ENCODE measurements at regions of chr17 and their contacts with region 1.

Region 1: GRCh38 chr17:19362277-19363113 is at the start of gene B9D1:
- DNase-seq: peak; percentile 90
- H3K4me3 Mint-ChIP-seq: peak within 1 kb of the TSS; percentile 78
- H3K27ac Mint-ChIP-seq: peak within 1 kb of the TSS; percentile 89
- H3K4me1 Mint-ChIP-seq: peaks cover 14% of the 10 kb centered on the region
- H3K27me3 Mint-ChIP-seq: no peaks in the 10 kb centered on the region
- CTCF ChIP-seq: peak; percentile 97
- total RNA-seq, gene B9D1: 30.4 and 33.0 TPM in 2 replicates

Region 2: DNA sequence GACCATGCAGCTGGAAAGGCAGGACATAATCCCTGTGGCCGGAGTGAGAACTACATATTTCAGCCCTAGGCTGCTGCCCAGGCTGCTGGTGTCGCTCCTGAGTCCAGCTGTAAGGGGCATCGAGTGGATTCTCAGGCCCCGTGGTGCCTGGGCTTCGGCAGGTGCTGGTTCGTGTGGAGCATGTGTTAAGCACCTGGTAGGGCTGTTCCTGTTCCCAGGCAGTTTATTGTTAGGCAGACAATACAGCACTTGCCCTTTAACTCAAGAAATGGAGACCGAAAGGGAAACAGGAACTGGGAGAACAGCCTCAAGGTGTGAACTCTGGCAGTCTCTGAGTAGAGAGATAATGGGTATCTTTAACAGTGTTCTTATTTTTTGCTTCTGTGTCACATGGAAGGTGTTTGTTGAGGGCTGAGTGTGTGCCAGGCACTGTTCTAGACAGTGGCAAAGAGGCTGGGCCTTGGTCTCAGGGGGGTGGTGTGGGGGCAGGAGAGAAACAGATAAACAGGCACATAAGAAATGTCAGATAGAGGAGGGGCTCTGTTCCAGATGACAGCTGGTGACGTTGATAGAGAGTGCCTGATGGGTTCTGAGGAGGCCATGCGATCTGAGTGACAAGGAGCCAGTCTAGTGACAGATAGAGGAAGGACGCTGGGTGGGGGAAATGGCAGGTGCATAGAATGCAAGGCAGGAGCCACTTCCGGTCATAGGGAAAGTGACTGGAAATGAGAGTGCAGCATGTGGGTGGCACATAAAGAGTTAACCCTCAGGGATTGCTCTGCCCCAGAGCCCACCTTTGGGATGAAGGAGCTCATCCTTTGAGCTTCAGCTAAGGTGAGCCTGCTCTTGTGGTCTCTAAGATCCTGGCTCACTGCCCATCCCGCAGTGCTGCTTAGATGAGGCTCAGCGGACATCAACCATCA is 91.5 kb before region 1 on chr17:
- CTCF ChIA-PET with region 1: no interaction called
- POLR2A ChIA-PET with region 1: no interaction called
- intact Hi-C with region 1: no loop called
- DNase-seq: no peak
- H3K4me3 Mint-ChIP-seq: no peak overlapping the region
- H3K27ac Mint-ChIP-seq: no peak overlapping the region
- H3K4me1 Mint-ChIP-seq: peaks cover 12% of the 10 kb centered on the region
- H3K27me3 Mint-ChIP-seq: no peaks in the 10 kb centered on the region
- CTCF ChIP-seq: no peak

Region 3: GRCh38 chr17:19386974-19387920 is 24.8 kb after region 1 on chr17 and contains the start of gene MFAP4:
- CTCF ChIA-PET with region 1: interaction called, 14 read pairs
- POLR2A ChIA-PET with region 1: no interaction called
- intact Hi-C with region 1: no loop called
- DNase-seq: no peak
- H3K4me3 Mint-ChIP-seq: no peak within 1 kb of the TSS
- H3K27ac Mint-ChIP-seq: peak within 1 kb of the TSS; percentile 46
- H3K4me1 Mint-ChIP-seq: peaks cover 26% of the 10 kb centered on the region
- H3K27me3 Mint-ChIP-seq: no peaks in the 10 kb centered on the region
- CTCF ChIP-seq: no peak
- total RNA-seq, gene MFAP4: not detected in 2 replicates

Region 4: GRCh38 chr17:19447085-19447583 is 84.6 kb after region 1 on chr17:
- CTCF ChIA-PET with region 1: interaction called, 147 read pairs
- POLR2A ChIA-PET with region 1: interaction called, 61 read pairs
- intact Hi-C with region 1: loop called (anchors 1 kb)
- DNase-seq: peak; percentile 73
- H3K4me3 Mint-ChIP-seq: no peak overlapping the region
- H3K27ac Mint-ChIP-seq: peak overlapping the region; percentile 93
- H3K4me1 Mint-ChIP-seq: peaks cover 27% of the 10 kb centered on the region
- H3K27me3 Mint-ChIP-seq: no peaks in the 10 kb centered on the region
- CTCF ChIP-seq: peak; percentile 88

Region 5: DNA sequence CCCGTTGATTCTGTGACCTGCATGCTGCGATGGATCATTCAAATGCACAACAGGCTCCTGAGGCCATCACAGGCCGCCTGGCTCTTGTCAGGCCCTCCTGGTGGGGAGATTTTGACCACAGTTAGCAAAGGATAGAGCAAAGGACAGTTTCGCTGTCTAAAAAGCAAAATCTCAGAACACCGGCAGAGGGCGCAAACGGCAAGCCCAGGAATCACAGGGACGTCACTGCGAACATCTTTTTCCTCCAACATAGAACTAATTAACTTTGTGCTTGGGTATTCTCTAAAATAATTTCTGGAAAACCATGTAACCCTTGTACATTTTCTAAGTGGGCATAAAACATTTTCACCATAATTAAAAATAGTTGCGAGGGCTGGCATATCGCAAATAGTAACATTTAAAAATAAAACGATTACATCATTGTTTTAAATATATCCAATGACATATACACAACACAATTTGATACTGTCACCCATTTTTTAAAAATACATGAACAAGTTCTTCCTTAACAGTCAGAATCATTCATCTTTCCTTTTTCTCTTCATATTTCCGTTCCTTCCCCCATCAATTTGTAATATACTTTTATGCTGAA is 151.5 kb after region 1 on chr17:
- CTCF ChIA-PET with region 1: interaction called, 4 read pairs
- POLR2A ChIA-PET with region 1: no interaction called
- intact Hi-C with region 1: loop called (anchors 2 kb)
- DNase-seq: peak; percentile 76
- H3K4me3 Mint-ChIP-seq: no peak overlapping the region
- H3K27ac Mint-ChIP-seq: no peak overlapping the region
- H3K4me1 Mint-ChIP-seq: no peaks in the 10 kb centered on the region
- H3K27me3 Mint-ChIP-seq: no peaks in the 10 kb centered on the region
- CTCF ChIP-seq: peak; percentile 82

Region 6: DNA sequence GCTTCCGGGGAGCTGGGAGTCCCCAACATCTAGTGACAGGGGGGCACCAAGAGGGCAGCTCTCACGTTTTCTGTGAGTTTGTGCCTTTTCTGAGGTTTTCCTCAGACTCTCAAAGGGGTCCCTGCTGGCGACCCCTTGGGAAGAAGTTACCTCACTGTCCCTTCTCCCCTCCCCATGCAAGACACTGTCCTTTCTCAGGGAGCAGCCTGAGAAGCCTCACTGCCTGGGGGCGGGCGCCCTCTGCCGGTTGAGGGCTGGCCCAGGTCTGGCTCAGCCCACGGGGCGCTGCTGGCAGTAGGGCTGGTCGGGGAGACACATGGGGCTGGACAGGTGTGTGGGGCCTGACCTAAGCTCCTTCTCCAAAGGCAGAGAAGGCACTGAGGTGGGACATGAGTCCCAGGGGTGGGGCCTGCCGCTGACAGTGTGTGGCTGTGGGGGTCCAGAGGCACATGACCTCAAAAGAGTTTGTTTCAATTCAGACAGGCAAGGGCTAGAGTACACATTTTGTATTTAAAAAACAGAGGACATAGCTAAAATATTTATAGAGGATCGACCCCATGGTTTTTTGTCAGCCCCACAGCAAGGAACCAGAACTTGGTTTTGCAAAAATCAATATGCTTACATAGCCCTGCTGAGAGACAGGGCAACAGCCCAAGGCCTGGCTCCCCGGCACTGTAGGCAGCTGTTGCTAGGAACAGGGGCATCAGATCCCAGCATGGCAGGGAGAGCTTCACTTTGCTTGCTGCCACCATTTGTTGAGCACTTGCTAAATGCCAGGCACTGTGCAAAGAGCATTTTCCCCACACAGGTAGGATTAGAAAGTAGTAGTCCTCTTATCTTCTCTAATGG is 404.2 kb after region 1 on chr17:
- CTCF ChIA-PET with region 1: interaction called, 17 read pairs
- POLR2A ChIA-PET with region 1: interaction called, 3 read pairs
- intact Hi-C with region 1: loop called (anchors 2 kb)
- DNase-seq: peak; percentile 74
- H3K4me3 Mint-ChIP-seq: no peak overlapping the region
- H3K27ac Mint-ChIP-seq: no peak overlapping the region
- H3K4me1 Mint-ChIP-seq: peaks cover 5% of the 10 kb centered on the region
- H3K27me3 Mint-ChIP-seq: no peaks in the 10 kb centered on the region
- CTCF ChIP-seq: peak; percentile 99